Caco-2 (cell line): ENCODE measurements at regions of chr2 and their contacts with region 1.

Region 1: DNA sequence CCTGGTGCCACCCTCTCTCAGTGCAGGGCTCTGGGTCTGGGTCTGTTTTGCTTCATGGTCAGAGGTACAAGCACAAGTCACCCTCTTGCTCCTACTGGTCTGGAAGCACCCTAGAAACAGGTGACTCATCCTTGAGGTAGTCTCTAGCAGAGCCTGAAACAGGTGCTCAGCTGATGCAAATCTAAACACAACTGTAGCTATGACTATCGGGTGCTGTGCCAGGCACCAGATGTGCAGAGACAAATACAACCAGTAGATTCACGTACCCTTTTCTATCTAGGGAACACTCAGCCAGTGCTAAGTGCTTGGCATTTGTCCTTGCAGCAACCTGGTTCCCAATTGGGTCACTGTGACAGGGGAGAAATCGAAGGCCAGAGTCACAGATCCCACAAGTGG is 140.9 kb upstream of the MYCN start:
- DNase-seq: no peak
- H3K4me3 ChIP-seq: no peak overlapping the region
- H3K4me3 Mint-ChIP-seq: no peak overlapping the region
- H3K27ac Mint-ChIP-seq: peak overlapping the region; percentile 62
- H3K4me1 ChIP-seq: peaks cover 49% of the 10 kb centered on the region
- H3K4me1 Mint-ChIP-seq: peaks cover 39% of the 10 kb centered on the region
- H3K27me3 ChIP-seq: no peaks in the 10 kb centered on the region
- H3K27me3 Mint-ChIP-seq: no peaks in the 10 kb centered on the region
- CTCF ChIP-seq: no peak

Region 2: DNA sequence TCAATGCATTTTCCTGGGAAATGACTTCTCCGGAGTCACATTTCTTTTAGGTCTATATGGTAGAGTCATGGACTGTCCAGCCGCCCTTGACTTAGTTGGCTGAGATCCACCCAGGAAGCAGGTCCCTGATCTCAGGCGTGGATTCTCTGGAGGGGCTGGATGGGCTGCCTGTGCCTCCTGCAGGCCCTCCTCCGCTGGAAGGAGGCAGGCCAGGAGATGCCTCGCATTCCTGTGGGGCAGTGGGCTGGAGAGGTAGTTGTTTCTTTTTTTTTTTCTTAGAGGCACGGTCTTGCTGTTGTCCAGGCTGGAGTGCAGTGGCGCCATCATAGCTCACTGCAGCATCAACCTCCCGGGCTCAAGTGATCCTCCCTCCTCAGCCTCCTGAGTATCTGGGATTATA is 11.9 kb after region 1 on chr2:
- CTCF ChIA-PET with region 1: no interaction called
- POLR2A ChIA-PET with region 1: no interaction called
- intact Hi-C with region 1: loop called (anchors 1 kb)
- DNase-seq: peak; percentile 23 to 53
- H3K4me3 ChIP-seq: no peak overlapping the region
- H3K4me3 Mint-ChIP-seq: no peak overlapping the region
- H3K27ac Mint-ChIP-seq: peak overlapping the region; percentile 52
- H3K4me1 ChIP-seq: peaks cover 14% of the 10 kb centered on the region
- H3K4me1 Mint-ChIP-seq: no peaks in the 10 kb centered on the region
- H3K27me3 ChIP-seq: no peaks in the 10 kb centered on the region
- H3K27me3 Mint-ChIP-seq: no peaks in the 10 kb centered on the region
- CTCF ChIP-seq: no peak

Region 3: GRCh38 chr2:15890936-15891900 is 91.8 kb after region 1 on chr2:
- CTCF ChIA-PET with region 1: no interaction called
- POLR2A ChIA-PET with region 1: no interaction called
- intact Hi-C with region 1: loop called (anchors 5 kb)
- DNase-seq: peak; percentile 89 to 94
- H3K4me3 ChIP-seq: no peak overlapping the region
- H3K4me3 Mint-ChIP-seq: peak overlapping the region; percentile 29
- H3K27ac Mint-ChIP-seq: peak overlapping the region; percentile 96
- H3K4me1 ChIP-seq: peaks cover 45% of the 10 kb centered on the region
- H3K4me1 Mint-ChIP-seq: peaks cover 58% of the 10 kb centered on the region
- H3K27me3 ChIP-seq: no peaks in the 10 kb centered on the region
- H3K27me3 Mint-ChIP-seq: no peaks in the 10 kb centered on the region
- CTCF ChIP-seq: no peak

Region 4: DNA sequence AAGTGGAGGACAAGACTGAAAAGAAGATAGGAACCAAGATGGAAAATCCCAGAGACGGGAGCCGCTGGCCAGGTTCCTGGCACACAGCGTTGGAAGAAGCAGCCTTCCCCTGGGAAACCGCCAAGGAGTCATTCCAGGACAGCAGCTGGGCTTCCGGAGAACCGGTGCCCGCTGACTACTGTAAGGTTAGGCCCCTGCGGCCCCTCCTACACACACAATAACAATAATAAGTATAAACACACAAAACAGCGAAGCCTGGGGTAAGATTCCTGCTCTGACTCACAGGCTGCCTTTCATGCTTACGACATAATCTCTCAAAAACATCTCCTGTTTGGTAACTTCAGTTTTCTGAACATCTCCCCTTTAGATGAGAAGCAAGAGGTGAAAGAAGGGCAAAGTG is 112.8 kb after region 1 on chr2:
- CTCF ChIA-PET with region 1: no interaction called
- POLR2A ChIA-PET with region 1: interaction called, 3 read pairs
- intact Hi-C with region 1: loop called (anchors 5 kb)
- DNase-seq: no peak
- H3K4me3 ChIP-seq: no peak overlapping the region
- H3K4me3 Mint-ChIP-seq: no peak overlapping the region
- H3K27ac Mint-ChIP-seq: no peak overlapping the region
- H3K4me1 ChIP-seq: 0 out of 2 replicates have a peak, but pooled peaks cover 5% of the 10 kb centered on the region
- H3K4me1 Mint-ChIP-seq: no peaks in the 10 kb centered on the region
- H3K27me3 ChIP-seq: no peaks in the 10 kb centered on the region
- H3K27me3 Mint-ChIP-seq: no peaks in the 10 kb centered on the region
- CTCF ChIP-seq: no peak

Region 5: DNA sequence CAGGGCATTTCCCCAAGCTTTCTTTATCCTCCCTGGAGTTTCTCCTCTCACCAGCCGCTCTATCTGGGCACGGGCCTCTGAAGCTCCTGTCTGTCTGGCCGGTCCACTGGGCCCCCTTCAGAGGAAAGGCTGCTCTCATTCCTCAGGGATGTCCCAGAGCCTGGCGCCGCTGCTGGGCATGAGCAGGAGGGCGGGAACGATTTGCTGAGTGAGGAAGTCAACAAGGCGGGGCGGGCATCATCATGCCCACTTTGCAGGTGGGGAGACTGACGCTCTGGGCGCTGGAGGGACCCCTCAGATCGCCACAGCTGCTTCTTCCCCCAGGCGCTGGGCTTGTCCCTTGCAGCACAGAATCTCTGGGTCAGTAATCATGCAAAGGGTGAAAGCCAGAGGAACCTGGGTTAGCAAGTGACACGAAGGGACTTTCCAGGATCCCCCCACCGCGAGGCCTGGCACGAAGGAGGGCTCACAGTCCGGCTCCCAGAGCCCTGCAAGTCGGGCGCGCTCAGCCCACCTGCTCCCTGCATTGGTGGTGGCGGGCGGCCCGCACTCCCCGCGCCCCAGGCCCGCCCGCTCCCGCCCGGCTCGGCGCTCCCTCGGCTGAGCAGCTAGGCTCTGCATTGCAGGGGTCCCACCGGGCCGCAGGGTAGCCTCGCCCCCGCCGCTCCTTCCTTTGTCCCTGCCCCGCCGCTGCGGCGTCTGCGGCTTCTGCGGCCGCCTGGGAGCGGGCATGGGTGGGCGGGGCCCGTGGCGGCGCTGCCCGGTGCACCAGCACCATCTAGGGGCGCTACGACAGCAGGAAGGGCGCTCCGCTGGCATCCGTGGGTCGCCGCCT is 708.4 kb after region 1 on chr2:
- CTCF ChIA-PET with region 1: no interaction called
- POLR2A ChIA-PET with region 1: no interaction called
- intact Hi-C with region 1: loop called (anchors 5 kb)
- DNase-seq: peak; percentile 66 to 82
- H3K4me3 ChIP-seq: peak overlapping the region; percentile 26
- H3K4me3 Mint-ChIP-seq: peak overlapping the region; percentile 61
- H3K27ac Mint-ChIP-seq: peak overlapping the region; percentile 37
- H3K4me1 ChIP-seq: peaks cover 36% of the 10 kb centered on the region
- H3K4me1 Mint-ChIP-seq: peaks cover 12% of the 10 kb centered on the region
- H3K27me3 ChIP-seq: no peaks in the 10 kb centered on the region
- H3K27me3 Mint-ChIP-seq: no peaks in the 10 kb centered on the region
- CTCF ChIP-seq: peak; percentile 83 to 91